ENCODE measurements at regions of chr20 and their contacts with region 1.

Region 1: DNA sequence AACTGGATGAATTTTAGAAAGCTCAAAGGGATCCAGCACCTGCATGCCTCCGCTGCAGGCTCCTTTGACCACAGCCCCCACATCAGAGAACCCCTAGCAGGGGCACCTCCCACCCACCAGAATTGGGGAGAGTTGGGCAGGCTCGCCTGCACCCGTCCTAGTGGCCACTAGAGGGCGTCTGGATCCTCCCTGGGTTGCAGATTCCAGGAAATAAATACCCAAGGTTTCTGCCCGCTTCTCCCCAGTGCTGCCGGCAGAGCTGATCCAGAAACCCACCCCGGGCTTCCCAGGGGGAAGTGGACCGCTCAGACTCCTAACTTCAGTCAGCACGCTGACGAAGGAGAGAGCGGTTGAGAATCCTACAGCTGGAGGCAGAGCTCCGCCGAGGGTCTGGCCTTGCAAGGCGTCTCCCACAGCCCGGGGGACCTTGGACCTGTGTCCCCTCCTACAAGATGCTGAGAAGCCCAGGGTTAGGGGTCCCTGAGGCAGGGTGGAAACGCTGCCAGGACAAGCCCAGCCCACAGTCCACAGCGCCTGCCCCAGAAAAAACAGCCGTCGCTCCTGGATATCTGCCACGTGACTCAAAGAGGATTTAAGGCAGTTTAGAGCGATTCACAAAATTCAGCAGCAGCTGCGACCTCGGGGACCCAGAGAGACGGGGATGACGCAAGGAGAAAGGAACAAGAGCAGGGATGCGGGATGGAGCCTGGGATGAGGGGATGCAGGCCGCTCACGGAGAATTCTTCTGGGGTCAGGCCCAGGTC is 32.6 kb upstream of the PHACTR3 start:
- DNase-seq: peak; percentile 41 to 69
- ATAC-seq: peak; percentile 70 to 89
- H3K4me3 ChIP-seq: no peak overlapping the region
- H3K27ac ChIP-seq: no peak overlapping the region
- H3K4me1 ChIP-seq: no peaks in the 10 kb centered on the region
- CTCF ChIP-seq: peak; percentile 84
- EP300 ChIP-seq: no peak
- POLR2A ChIP-seq: no peak
- RAD21 ChIP-seq: peak; percentile 43 to 45; a peak in 3 of 5 replicates

Region 2: DNA sequence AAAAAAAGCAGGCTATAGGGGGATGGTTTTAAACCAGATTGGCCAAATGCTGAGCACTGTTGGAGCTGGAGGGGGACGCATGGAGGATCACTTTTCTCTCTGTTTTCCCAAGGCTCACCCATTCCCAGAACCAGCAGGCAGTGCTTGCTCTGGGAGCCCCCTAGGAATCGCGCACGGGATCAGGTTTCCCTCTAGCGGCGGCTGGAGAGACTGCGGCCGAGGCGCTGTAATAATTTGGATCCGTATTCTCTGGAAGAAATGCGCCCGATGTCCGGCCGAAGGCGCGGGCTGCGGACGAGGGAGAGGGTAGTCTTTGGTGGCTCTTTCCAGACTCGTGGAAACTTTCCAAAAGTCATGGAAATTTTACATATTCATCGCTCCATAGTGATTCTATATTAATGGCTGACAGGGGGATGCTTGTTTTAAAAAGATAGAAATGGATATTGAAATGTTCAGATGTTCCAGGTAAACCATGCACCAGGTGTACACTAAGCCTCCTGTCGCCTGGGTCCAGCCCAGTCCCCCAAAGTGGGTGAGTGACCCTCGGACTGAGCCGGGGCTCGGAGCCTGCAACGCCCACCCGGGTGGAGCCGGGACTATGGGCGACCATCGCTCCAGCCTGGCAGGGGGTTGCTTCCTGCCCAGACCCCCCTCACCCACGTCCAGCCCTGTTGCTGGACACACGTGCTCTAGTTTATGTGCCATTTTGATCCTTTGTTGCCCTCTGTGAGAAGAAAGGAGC is 46.1 kb before region 1 on chr20:
- CTCF ChIA-PET with region 1: interaction called, 10 read pairs
- POLR2A ChIA-PET with region 1: no interaction called
- DNase-seq: peak; percentile 43 to 66
- ATAC-seq: peak; percentile 92 to 97
- H3K4me3 ChIP-seq: no peak overlapping the region
- H3K27ac ChIP-seq: no peak overlapping the region
- H3K4me1 ChIP-seq: no peaks in the 10 kb centered on the region
- CTCF ChIP-seq: peak; percentile 83
- EP300 ChIP-seq: no peak
- POLR2A ChIP-seq: no peak
- RAD21 ChIP-seq: peak; percentile 49 to 56

Region 3: DNA sequence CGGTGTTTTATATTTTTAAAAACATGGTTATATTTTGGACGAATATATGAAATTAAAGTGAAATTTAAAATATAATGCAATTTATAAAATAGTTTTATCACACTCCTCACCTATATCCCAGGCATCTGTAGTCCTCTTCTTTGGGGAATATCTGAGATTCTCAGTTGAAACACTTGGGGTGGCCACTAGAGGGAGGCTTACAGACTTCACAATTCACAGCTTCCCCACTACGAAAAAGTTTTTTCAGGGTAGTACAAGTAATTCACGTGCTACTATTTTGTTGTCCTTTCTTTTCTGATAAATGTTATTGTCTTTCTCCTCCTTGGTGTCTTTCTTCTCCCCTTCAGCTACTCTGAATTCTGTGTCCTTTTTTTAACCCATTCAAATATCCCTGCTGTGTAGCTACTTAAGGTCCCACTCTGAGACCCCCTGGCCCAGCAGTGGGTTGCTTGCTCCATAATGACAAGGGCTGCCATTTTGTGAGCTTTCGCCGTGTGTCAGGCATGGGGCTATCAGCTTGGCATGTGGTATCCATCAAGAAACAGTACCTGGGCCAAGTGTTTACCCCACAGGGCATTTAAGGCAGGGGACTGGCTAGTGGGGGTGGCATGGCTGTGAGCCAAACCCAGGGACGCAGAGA is 11.0 kb before region 1 on chr20:
- CTCF ChIA-PET with region 1: interaction called, 75 read pairs
- POLR2A ChIA-PET with region 1: no interaction called
- DNase-seq: peak; percentile 35 to 75
- ATAC-seq: peak; percentile 79 to 86; a peak in 4 of 6 replicates
- H3K4me3 ChIP-seq: no peak overlapping the region
- H3K27ac ChIP-seq: no peak overlapping the region
- H3K4me1 ChIP-seq: no peaks in the 10 kb centered on the region
- CTCF ChIP-seq: peak; percentile 43
- EP300 ChIP-seq: no peak
- POLR2A ChIP-seq: no peak
- RAD21 ChIP-seq: no peak

Region 4: GRCh38 chr20:59598625-59599310 is 27.0 kb after region 1 on chr20:
- CTCF ChIA-PET with region 1: interaction called, 35 read pairs
- POLR2A ChIA-PET with region 1: no interaction called
- DNase-seq: peak; percentile 42 to 71
- ATAC-seq: peak; percentile 73 to 94; a peak in 5 of 6 replicates
- H3K4me3 ChIP-seq: no peak overlapping the region
- H3K27ac ChIP-seq: no peak overlapping the region
- H3K4me1 ChIP-seq: no peaks in the 10 kb centered on the region
- CTCF ChIP-seq: peak; percentile 74
- EP300 ChIP-seq: no peak
- POLR2A ChIP-seq: no peak
- RAD21 ChIP-seq: peak; percentile 70 to 82

Region 5: GRCh38 chr20:59751056-59751688 is 179.4 kb after region 1 on chr20:
- CTCF ChIA-PET with region 1: interaction called, 37 read pairs
- POLR2A ChIA-PET with region 1: no interaction called
- DNase-seq: peak; percentile 68 to 72
- ATAC-seq: peak; percentile 87 to 96
- H3K4me3 ChIP-seq: no peak overlapping the region
- H3K27ac ChIP-seq: no peak overlapping the region
- H3K4me1 ChIP-seq: no peaks in the 10 kb centered on the region
- CTCF ChIP-seq: peak; percentile 63
- EP300 ChIP-seq: no peak
- POLR2A ChIP-seq: no peak
- RAD21 ChIP-seq: peak; percentile 76 to 77

Measured in A549 (cell line).